PC-9 (cell line): ENCODE measurements at regions of chr16 and their contacts with region 1.

Region 1: GRCh38 chr16:85528528-85529387 is 84.4 kb upstream of the GSE1 start:
- DNase-seq: no peak
- H3K4me3 ChIP-seq: no peak overlapping the region
- H3K27ac ChIP-seq: no peak overlapping the region
- H3K4me1 ChIP-seq: peaks cover 25% of the 10 kb centered on the region
- H3K27me3 ChIP-seq: no peaks in the 10 kb centered on the region
- CTCF ChIP-seq: peak; percentile 60

Region 2: DNA sequence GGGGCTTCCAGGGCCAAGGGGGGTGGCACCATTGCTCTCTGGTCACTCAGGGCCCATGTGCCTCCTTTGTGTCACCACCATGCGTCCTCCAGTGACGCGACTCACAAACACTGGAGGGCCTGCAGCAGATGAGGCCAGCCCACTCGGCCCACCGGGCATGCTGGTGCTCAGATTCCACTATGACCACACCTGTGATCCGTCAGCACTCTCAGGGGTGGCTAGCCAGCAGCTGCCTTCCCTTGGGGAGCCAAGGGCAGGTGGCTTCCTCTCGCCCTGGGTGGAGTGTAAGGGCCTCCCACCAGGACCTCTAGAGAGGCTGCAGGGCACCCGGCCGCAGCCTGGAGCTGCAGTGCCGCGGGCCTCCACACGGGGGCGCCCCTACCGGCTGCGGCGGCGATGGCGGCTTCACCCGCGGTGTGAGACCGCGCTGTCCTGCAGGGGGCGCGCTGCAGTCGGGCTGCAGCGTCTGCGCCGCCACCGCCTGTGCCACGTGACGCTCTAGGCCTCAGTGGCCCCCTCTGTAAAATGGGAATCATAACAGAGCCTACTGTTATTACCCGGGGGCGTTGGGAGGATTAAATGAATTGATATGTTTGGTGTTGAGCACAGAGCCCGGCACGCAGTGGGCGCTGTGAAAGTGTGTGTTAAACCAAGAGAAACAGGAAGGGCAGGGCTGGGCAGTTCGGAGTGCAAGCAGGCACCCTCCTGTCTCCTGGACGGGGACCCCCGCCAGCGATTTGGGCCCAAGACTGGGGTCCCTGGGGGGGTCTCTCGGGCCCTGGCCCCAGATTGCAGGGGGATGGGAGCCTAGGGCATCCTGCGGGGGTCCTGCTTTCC is 108.0 kb before region 1 on chr16:
- CTCF ChIA-PET with region 1: no interaction called
- POLR2A ChIA-PET with region 1: no interaction called
- intact Hi-C with region 1: loop called (anchors 2 kb)
- DNase-seq: peak in 1 of 2 experiments; percentile 75
- H3K4me3 ChIP-seq: no peak overlapping the region
- H3K27ac ChIP-seq: no peak overlapping the region
- H3K4me1 ChIP-seq: peaks cover 20% of the 10 kb centered on the region
- H3K27me3 ChIP-seq: no peaks in the 10 kb centered on the region
- CTCF ChIP-seq: peak; percentile 99

Region 3: DNA sequence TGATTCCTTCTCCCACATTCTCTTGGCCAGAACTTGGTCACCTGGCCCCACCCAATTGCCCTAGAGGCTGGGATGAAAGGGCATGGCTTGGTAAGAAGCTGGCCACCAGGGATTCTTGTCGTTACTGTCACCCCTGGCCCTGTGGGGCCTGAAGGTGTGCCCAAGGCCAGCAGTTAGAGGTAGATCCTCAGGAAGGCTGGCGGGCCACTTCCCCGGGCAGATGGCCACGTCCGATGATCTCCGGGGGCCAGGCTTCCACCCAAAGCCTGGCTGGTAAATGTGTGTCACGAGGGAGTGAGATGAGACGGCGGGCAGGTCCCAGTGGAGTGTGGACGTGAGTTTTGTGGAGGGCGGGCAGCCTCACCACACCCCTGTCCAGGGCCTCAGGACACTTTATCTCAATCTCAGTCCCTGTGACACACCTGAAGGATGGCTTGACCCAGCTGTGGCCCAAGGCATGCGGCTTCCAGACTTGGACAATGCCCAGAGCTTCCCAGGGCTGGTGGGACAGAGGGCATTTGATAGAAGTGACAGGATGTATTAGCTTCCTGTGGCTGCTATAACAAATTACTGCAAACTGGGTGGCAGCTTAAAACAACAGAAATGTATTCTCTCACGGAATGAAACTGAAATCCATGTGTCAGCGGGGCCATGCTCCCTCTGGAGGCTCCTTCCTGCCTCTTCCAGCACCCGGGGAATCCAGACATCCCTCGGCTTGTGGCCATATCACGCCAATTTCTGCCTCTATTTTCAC is 18.1 kb after region 1 on chr16:
- CTCF ChIA-PET with region 1: interaction called, 14 read pairs
- POLR2A ChIA-PET with region 1: no interaction called
- intact Hi-C with region 1: no loop called
- DNase-seq: no peak
- H3K4me3 ChIP-seq: no peak overlapping the region
- H3K27ac ChIP-seq: no peak overlapping the region
- H3K4me1 ChIP-seq: peaks cover 7% of the 10 kb centered on the region; the same call in 1 of the 2 replicates
- H3K27me3 ChIP-seq: no peaks in the 10 kb centered on the region
- CTCF ChIP-seq: no peak

Region 4: GRCh38 chr16:86306811-86307516 is 778.2 kb after region 1 on chr16:
- CTCF ChIA-PET with region 1: no interaction called
- POLR2A ChIA-PET with region 1: no interaction called
- intact Hi-C with region 1: no loop called
- DNase-seq: no peak
- H3K4me3 ChIP-seq: no peak overlapping the region
- H3K27ac ChIP-seq: no peak overlapping the region
- H3K4me1 ChIP-seq: no peaks in the 10 kb centered on the region
- H3K27me3 ChIP-seq: peaks cover 81% of the 10 kb centered on the region
- CTCF ChIP-seq: no peak